ENCODE measurements at regions of chr5 and their contacts with region 1.

Region 1: DNA sequence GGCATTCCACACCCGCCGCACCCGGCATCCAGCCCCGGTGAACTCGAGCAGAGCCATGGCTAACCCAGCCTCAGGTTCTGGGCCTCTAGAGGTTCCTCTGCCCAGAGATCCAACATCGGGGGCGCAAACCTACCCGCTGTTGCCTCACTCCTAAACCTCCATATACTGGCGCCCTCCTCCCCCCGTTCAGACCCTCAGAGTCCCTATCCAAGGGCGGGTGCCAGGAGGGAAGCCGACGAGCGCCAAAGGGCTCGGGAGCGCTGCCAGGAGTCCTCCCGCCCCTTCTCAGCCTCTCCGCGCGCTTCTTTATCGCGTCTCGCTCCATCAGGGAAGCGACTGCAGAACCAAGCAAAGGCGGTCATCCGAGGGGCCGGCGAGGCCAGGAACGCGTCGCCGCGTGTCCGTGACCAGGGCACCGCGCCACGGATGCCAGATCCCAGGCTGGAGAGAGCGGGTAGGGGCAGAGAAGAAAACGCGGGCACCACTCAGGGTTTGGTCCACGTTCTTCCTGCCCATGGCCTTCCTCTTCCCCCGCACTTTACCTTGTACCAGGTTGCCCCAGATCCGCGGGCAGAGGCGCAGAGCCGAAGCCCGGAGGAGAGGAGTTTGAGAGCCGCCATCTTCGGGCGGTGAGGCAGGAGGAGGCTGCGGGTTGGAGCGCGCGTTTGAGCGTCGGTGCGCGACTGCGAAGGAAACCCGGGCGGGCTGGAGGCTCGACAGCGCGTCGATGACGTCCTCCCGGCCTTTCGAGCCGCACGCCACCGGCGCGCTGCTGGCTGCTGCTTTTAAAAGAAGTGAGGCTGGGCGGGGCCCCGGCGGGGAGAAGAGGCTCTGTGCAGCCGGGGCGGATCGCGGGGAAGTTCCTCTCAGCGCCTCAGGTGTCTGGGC is at the start of gene OXCT1:
- DNase-seq: peak; percentile 92
- H3K4me3 ChIP-seq: peak within 1 kb of the TSS; percentile 80
- H3K27ac ChIP-seq: peak within 1 kb of the TSS; percentile 32
- H3K4me1 ChIP-seq: peaks cover 24% of the 10 kb centered on the region
- CTCF ChIP-seq: no peak; the same call in 1 of the 2 replicates
- total RNA-seq, gene OXCT1: 22.5 and 27.0 TPM in 2 replicates

Region 2: DNA sequence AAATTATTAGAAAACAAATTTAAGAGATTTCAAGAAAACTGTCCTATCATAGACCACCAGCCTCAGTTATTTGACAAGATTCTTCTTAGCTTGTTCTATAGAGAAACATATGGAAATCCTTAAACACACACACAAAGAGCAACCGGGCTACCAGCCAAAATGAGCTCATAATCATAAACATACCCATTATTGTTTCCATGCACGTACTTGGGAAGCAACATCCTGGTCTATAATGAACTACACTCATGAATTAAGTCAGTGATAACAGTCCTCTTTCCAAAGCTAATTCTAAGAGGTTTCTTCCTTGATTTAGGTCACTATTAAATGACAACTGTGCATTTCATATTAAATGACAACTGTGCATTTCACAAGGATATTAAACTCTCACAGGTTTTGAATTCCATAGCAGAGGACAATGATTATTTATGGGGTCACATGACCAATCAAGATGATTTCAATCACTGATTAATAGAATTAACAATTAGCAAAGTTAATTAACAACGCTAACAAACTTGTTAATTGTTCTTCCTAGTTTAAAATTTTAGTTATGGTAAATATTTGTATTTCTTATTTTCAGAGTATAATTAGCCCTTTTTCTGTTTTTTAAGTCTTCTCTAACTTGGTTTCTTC is 76.7 kb before region 1 on chr5:
- CTCF ChIA-PET with region 1: no interaction called
- POLR2A ChIA-PET with region 1: no interaction called
- intact Hi-C with region 1: no loop called
- DNase-seq: no peak
- H3K4me3 ChIP-seq: no peak overlapping the region
- H3K27ac ChIP-seq: no peak overlapping the region
- H3K4me1 ChIP-seq: no peaks in the 10 kb centered on the region
- CTCF ChIP-seq: no peak

Region 3: GRCh38 chr5:41903892-41904799 is 34.2 kb after region 1 on chr5 and contains the start of gene RIMOC1:
- CTCF ChIA-PET with region 1: no interaction called
- POLR2A ChIA-PET with region 1: interaction called, 6 read pairs
- intact Hi-C with region 1: loop called (anchors 1 kb)
- DNase-seq: peak; percentile 98
- H3K4me3 ChIP-seq: peak within 1 kb of the TSS; percentile 82
- H3K27ac ChIP-seq: peak within 1 kb of the TSS; percentile 39
- H3K4me1 ChIP-seq: peaks cover 22% of the 10 kb centered on the region
- CTCF ChIP-seq: no peak
- total RNA-seq, gene RIMOC1: 7.9 and 8.5 TPM in 2 replicates